Right lobe of liver (tissue), 6 donors: ENCODE measurements at regions of chr1 and their contacts with region 1.

Region 1: GRCh38 chr1:165144757-165145397 is 211.6 kb downstream of the LMX1A start:
- DNase-seq: peak in 2 of 3 donors; percentile 28 to 65
- ATAC-seq: peak; percentile 94 to 99 (median 96)
- H3K4me3 ChIP-seq: no peak overlapping the region
- H3K27ac ChIP-seq: no peak overlapping the region
- H3K4me1 ChIP-seq: no peaks in the 10 kb centered on the region
- H3K27me3 ChIP-seq: no peaks in the 10 kb centered on the region
- CTCF ChIP-seq: peak; percentile 74 to 86 (median 82)
- POLR2A ChIP-seq: no peak

Region 2: GRCh38 chr1:165073185-165074007 is 71.5 kb before region 1 on chr1:
- intact Hi-C with region 1: no loop called
- DNase-seq: no peak
- ATAC-seq: peak; percentile 81 to 87 (median 85)
- H3K4me3 ChIP-seq: no peak overlapping the region
- H3K27ac ChIP-seq: no peak overlapping the region
- H3K4me1 ChIP-seq: no peaks in the 10 kb centered on the region
- H3K27me3 ChIP-seq: no peaks in the 10 kb centered on the region
- CTCF ChIP-seq: peak; percentile 62 to 78 (median 76)
- POLR2A ChIP-seq: no peak

Region 3: GRCh38 chr1:165279882-165280281 is 135.0 kb after region 1 on chr1:
- intact Hi-C with region 1: loop called in 1 of 2 experiments (anchors 10 kb)
- DNase-seq: no peak
- ATAC-seq: no peak
- H3K4me3 ChIP-seq: no peak overlapping the region
- H3K27ac ChIP-seq: no peak overlapping the region
- H3K4me1 ChIP-seq: peaks cover 0 to 33% (median 6%) of the 10 kb centered on the region in 4 donors
- H3K27me3 ChIP-seq: no peaks in the 10 kb centered on the region
- CTCF ChIP-seq: no peak
- POLR2A ChIP-seq: no peak

Region 4: GRCh38 chr1:165367375-165367993 is 222.6 kb after region 1 on chr1:
- intact Hi-C with region 1: loop called in 1 of 2 experiments (anchors 5 kb)
- DNase-seq: peak; percentile 72 to 90 (median 75)
- ATAC-seq: peak; percentile 74 to 85 (median 83)
- H3K4me3 ChIP-seq: no peak overlapping the region
- H3K27ac ChIP-seq: no peak overlapping the region
- H3K4me1 ChIP-seq: no peaks in the 10 kb centered on the region
- H3K27me3 ChIP-seq: no peaks in the 10 kb centered on the region
- CTCF ChIP-seq: peak; percentile 78 to 98 (median 93)
- POLR2A ChIP-seq: no peak